ENCODE measurements at regions of chr17 and their contacts with region 1.

Region 1: DNA sequence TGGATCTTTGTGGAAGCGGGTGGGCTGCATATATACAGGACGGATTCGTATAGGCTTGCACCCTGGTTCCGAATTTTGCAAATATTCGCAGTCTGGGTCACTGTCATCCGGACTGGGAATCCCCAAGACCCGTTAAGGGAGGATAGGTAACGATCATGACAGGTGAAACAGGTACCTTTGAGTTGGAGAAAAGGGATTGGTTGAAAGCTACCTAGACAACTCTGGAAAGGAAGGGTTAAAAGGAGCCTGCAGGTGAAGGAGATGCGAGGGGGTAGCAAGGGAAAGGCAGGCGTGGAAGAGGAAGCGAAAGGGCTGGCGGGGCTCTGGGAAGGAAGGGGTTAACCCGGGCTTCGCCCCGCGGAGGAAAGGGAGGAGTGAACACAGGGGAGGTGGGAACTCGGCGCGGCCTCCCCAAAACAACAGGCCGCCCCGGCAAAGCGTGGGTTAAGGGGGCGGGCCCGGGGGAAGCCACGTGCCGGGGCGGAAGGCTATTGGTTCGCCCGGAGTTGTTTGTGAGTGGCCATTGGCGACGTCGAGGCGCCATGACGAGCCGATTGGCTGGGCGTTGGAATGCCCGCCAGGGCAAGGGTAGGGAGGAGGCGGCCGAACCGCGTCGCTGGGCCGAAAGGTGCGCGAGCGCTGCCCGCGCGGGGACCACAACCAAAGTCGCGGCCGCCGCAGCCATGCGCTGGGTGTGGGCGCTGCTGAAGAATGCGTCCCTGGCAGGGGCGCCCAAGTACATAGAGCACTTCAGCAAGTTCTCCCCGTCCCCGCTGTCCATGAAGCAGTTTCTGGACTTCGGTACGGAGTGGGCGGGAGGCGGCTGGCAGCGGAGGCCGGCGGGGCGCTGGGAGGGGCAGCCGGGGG is at the start of gene PDK2:
- DNase-seq: peak; percentile 97
- ATAC-seq: peak; percentile 96
- H3K4me3 Mint-ChIP-seq: peak within 1 kb of the TSS; percentile 86
- H3K27ac Mint-ChIP-seq: peak within 1 kb of the TSS; percentile 87
- H3K4me1 Mint-ChIP-seq: peaks cover 27% of the 10 kb centered on the region
- H3K27me3 Mint-ChIP-seq: peaks cover 2% of the 10 kb centered on the region
- total RNA-seq, gene PDK2: 18.1 to 21.2 TPM

Region 2: DNA sequence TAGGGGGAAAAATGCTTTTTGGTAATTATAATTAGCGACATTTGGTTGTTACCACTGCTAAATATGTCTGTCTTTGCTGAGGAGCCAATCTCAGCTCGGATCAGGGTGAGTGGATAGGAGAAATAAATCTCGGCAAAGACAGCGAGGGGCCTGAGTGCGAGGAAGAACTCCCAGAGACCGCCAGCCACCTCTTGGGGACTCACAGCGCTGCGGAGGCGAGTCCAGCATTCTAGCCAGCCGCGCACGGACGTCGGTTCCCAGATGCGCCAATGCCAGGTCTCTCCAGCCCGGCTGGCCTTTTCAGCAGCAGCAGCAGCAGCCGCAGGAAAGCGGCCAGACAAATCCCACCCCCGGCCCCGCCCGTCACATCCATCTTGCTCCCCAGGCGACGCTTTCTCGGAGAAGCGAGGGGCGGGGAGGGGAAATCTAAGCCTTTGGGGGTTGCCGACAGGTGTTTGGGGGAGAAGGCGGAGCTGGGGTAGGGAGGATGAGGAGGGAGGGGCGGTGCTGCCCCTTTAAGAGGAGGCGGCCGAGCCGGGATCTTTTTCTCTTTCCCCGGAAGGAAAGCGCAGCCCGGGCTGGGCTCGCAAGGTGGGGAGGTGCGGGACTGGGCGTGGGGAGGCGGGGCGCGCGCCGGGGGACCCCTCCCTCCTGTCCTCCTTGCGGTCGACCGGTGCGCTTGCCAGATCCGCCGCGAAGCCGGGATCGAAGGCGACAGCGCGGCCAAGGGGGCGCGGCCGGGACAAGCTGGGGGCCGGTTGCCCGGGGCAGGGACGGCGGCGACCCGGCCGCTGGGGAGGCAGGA is 39.4 kb before region 1 on chr17 and contains the start of gene ITGA3:
- CTCF ChIA-PET with region 1: interaction called, 19 read pairs
- POLR2A ChIA-PET with region 1: no interaction called
- DNase-seq: peak; percentile 71
- ATAC-seq: peak; percentile 72
- H3K4me3 Mint-ChIP-seq: peak within 1 kb of the TSS; percentile 85
- H3K27ac Mint-ChIP-seq: peak within 1 kb of the TSS; percentile 79
- H3K4me1 Mint-ChIP-seq: peaks cover 41% of the 10 kb centered on the region
- H3K27me3 Mint-ChIP-seq: no peaks in the 10 kb centered on the region
- total RNA-seq, gene ITGA3: 7.9 to 8.7 TPM

Region 3: DNA sequence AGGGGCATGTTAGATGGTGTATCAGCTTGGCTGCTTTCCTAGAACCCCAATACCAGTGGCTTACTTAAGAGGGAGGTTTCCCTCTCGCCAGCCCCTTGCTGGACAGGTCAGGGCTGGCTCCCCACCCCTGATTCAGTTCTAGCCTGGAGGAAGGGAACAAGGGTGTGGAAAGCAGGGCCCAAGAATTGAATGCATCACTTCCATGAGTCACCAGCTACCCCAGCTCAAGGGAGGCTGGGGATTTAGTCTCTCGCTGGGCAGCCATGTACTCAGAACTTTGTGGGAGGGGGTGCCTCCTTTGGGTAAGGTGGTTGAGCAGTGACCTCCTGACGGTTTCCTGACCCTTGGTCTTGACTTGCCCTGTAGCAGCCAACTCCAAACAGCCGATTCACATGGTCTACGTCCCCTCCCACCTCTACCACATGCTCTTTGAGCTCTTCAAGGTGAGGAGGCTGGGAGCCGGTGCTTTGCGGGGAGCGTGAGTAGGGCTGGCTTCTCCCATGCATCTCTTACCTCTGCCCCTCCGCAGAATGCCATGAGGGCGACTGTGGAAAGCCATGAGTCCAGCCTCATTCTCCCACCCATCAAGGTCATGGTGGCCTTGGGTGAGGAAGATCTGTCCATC is 12.9 kb after region 1 on chr17:
- CTCF ChIA-PET with region 1: interaction called, 115 read pairs
- POLR2A ChIA-PET with region 1: interaction called, 3 read pairs
- DNase-seq: no peak
- ATAC-seq: no peak
- H3K4me3 Mint-ChIP-seq: no peak overlapping the region
- H3K27ac Mint-ChIP-seq: no peak overlapping the region
- H3K4me1 Mint-ChIP-seq: no peaks in the 10 kb centered on the region
- H3K27me3 Mint-ChIP-seq: no peaks in the 10 kb centered on the region

Region 4: GRCh38 chr17:50129728-50130558 is 35.0 kb after region 1 on chr17 and contains the start of gene SAMD14:
- CTCF ChIA-PET with region 1: interaction called, 10 read pairs
- POLR2A ChIA-PET with region 1: no interaction called
- DNase-seq: peak; percentile 64
- ATAC-seq: peak; percentile 65
- H3K4me3 Mint-ChIP-seq: peak within 1 kb of the TSS; percentile 49
- H3K27ac Mint-ChIP-seq: no peak within 1 kb of the TSS
- H3K4me1 Mint-ChIP-seq: peaks cover 34% of the 10 kb centered on the region
- H3K27me3 Mint-ChIP-seq: peaks cover 37% of the 10 kb centered on the region
- total RNA-seq, gene SAMD14: 0.50 to 0.55 TPM

Region 5: DNA sequence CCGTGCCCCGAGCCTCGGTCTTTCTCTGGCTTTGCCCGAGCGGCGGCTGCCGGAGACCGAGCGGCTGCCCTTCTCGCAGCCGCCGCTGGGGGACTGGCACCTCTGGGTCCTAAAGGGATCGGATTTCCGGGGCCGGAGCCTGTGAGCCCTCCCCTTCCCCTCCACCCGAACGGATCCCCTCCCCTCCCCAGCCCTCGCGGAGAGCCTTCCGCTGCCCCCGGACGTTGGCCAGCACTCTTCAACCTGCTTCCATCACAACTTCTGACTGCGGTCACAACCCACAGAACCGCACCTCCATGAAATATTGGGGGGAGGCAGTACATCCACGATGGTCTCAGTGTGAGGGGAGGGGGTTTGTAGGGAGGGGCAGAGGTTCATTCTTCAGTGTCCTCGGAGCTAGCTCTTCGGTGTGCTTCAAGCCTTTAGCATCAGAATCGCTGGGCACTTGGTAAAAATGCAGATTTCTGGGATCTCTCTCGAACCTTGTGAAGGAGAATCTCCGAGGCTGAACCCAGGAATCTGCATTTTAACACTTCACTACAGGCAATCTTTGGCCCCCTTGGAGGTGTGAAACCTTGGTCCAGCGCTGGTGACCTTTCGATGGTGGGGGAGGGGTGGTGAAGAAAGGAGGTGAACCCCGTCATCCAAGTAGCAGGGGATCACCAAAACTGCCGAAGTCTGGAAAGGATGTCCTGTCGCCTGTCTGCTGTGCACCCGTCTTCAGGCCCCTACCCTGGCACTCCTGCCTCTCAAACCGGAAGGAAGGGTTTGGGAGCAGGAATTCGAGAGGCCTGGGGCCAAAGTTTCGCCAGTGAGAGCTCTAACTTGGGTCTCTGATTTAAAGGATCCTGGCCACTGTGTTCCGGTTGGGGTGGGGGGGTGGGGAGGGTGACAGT is 56.3 kb after region 1 on chr17:
- CTCF ChIA-PET with region 1: interaction called, 20 read pairs
- POLR2A ChIA-PET with region 1: interaction called, 8 read pairs
- DNase-seq: peak; percentile 94
- ATAC-seq: peak; percentile 77
- H3K4me3 Mint-ChIP-seq: peak overlapping the region; percentile 84
- H3K27ac Mint-ChIP-seq: peak overlapping the region; percentile 94
- H3K4me1 Mint-ChIP-seq: peaks cover 49% of the 10 kb centered on the region
- H3K27me3 Mint-ChIP-seq: no peaks in the 10 kb centered on the region

Region 6: DNA sequence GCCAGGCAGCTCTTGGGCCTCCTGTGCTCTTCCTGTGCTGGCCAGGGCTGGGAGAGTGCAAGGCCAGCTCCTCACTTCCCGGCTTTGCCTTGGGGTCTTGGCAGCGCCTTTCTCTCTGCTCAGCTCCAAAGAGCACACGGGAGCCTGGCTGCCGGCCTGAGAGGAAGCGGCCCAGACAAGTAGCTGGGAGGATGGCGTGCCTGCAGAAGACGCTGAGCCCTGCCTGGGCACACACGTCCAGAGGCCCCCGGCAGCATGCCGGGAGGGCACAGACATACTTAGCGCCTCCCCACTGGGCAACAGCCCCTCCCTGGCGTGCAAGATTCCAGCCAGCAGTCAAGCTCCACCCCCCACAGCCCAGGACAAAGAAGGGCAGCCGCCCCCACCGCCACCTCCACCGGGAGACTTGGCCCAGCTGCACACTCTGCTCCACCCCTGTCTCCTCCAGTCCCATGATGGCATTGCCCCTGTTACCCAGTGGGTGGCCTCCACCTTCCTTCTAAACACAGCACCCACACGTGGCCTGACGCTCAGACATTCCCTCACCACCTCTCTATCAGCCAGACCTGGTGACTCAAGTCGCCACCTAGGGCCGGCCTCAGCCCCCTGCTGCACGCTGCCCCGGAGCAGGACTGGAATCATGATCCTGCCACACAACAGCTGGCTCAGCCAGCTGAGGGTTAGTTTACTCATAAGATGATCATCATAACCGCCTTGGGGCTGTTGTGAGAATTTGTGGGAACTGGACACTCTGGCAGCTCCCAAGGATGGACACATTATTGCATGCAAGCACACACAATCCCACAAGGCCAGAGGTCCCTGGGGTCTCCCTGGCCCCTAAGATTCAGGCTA is 83.2 kb after region 1 on chr17:
- CTCF ChIA-PET with region 1: interaction called, 10 read pairs
- POLR2A ChIA-PET with region 1: no interaction called
- DNase-seq: peak; percentile 52
- ATAC-seq: peak; percentile 87
- H3K4me3 Mint-ChIP-seq: no peak overlapping the region
- H3K27ac Mint-ChIP-seq: no peak overlapping the region
- H3K4me1 Mint-ChIP-seq: peaks cover 20% of the 10 kb centered on the region
- H3K27me3 Mint-ChIP-seq: no peaks in the 10 kb centered on the region

Region 7: GRCh38 chr17:50252781-50253180 is 157.8 kb after region 1 on chr17:
- CTCF ChIA-PET with region 1: no interaction called
- POLR2A ChIA-PET with region 1: no interaction called
- DNase-seq: no peak
- ATAC-seq: no peak
- H3K4me3 Mint-ChIP-seq: no peak overlapping the region
- H3K27ac Mint-ChIP-seq: no peak overlapping the region
- H3K4me1 Mint-ChIP-seq: no peaks in the 10 kb centered on the region
- H3K27me3 Mint-ChIP-seq: peaks cover 32% of the 10 kb centered on the region

Region 8: DNA sequence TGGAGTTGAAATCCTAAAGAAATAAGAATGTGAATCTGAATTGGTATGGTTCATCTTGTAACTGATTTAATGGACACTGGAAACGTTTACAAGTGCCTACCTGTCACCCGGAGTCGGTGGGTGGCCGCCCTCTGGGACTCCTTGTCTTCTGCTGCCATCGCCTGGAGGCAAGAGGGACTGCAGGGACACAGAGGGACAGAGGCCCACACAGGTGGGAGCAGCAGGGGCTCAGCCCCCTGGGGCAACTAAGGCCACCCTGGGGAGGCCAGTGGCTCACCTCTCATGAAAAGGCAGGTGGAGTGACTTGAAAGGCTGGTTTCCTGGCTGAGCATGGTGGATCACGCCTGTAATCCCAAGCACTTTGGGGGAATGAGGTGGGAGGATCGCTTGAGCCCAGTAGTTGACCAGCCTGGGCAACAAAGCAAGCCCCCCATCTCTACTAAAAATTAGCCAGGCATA is 202.4 kb after region 1 on chr17:
- CTCF ChIA-PET with region 1: interaction called, 38 read pairs
- POLR2A ChIA-PET with region 1: no interaction called
- DNase-seq: peak; percentile 85
- ATAC-seq: peak; percentile 95
- H3K4me3 Mint-ChIP-seq: no peak overlapping the region
- H3K27ac Mint-ChIP-seq: no peak overlapping the region
- H3K4me1 Mint-ChIP-seq: peaks cover 5% of the 10 kb centered on the region
- H3K27me3 Mint-ChIP-seq: peaks cover 9% of the 10 kb centered on the region

Measured in activated CD8-positive, alpha-beta T cell treated with anti-CD3 and anti-CD28 coated beads, Interleukin-2, amount 10 ng/mL, durations not matched to agents 7 days and 5 days (primary cell).